Psoas muscle (tissue), 8 donors: ENCODE measurements at regions of chr1 and their contacts with region 1.

Region 1: DNA sequence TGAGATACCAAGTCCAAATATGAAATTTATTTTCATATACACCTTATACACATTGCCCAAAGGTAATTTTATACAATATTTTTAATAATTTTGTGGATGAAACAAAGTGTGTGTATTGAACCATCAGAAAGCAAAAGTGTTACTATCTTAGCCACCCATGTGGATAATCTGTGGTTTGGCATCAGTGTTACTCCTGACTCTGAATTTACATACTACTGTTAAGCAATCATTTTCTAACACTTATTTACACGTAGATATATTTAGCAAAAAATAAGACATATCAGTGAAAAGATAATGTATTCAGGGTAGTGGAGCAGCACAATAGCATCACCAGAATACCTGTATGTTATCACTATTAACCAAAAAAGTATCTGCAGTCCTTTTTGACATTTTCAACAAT is 23.8 kb downstream of the DENND2D start:
- DNase-seq: no peak
- ATAC-seq: no peak
- H3K4me3 ChIP-seq: no peak overlapping the region
- H3K27ac ChIP-seq: no peak overlapping the region
- H3K4me1 ChIP-seq: peaks cover 7% of the 10 kb centered on the region
- H3K27me3 ChIP-seq: no peaks in the 10 kb centered on the region
- CTCF ChIP-seq: no peak

Region 2: DNA sequence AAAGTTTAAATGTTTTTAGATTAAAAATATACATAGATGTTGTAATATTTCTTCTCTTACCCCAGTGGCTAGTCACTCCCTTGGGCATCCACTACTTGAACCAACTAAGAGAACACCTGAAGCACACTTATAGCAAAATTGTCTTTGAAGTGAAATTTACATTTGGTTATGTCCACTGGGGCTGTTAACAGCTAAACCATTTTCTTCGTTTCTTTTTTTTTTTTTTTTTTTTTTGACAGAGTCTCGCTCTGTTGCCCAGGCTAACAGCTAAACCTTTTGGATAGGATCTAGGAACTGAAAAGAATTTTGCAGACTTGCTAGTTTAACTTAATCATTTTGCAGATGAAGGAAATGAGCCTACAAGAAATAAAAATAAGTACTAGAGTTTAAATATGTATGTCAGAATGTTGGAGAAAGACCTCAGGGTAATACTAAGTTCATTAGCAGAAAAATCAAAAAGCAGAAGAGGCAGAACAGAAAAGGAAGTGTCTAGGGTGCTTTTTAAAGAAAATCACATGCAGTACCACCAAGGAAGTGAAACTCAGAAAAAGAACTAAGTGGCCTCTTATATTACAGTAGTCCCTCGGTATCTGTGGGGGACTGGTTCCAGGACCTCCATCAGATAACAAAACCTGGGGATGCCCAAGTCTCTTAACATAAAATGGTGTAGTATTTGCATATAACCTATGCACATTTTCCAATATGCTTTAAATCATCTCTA is 48.6 kb before region 1 on chr1:
- intact Hi-C with region 1: loop called in 1 of 2 experiments (anchors 10 kb)
- DNase-seq: no peak
- ATAC-seq: no peak
- H3K4me3 ChIP-seq: no peak overlapping the region
- H3K27ac ChIP-seq: no peak overlapping the region
- H3K4me1 ChIP-seq: no peaks in the 10 kb centered on the region
- H3K27me3 ChIP-seq: no peaks in the 10 kb centered on the region
- CTCF ChIP-seq: no peak

Region 3: GRCh38 chr1:111203681-111204200 is 27.1 kb after region 1 on chr1:
- intact Hi-C with region 1: no loop called
- DNase-seq: peak; percentile 77 to 82
- ATAC-seq: peak; percentile 38 to 67 (median 51)
- H3K4me3 ChIP-seq: peak overlapping the region; percentile 74
- H3K27ac ChIP-seq: no peak overlapping the region
- H3K4me1 ChIP-seq: peaks cover 4% of the 10 kb centered on the region
- H3K27me3 ChIP-seq: peaks cover 0 to 40% (median 17%) of the 10 kb centered on the region in 3 donors
- CTCF ChIP-seq: no peak